CD4-positive, alpha-beta T cell (primary cell): ENCODE measurements at regions of chr2 and their contacts with region 1.

Region 1: GRCh38 chr2:206765242-206766056 is at the starts of genes FASTKD2 and MDH1B:
- DNase-seq: peak; percentile 63 to 94 (median 74)
- ATAC-seq: peak; percentile 89
- H3K4me3 ChIP-seq: peak within 1 kb of the TSS; percentile 71
- H3K4me3 Mint-ChIP-seq: peak within 1 kb of the TSS; percentile 96
- H3K27ac ChIP-seq: peak within 1 kb of the TSS; percentile 80 to 85
- H3K27ac Mint-ChIP-seq: peak within 1 kb of the TSS; percentile 97
- H3K4me1 ChIP-seq: peaks cover 16% of the 10 kb centered on the region
- H3K4me1 Mint-ChIP-seq: peaks cover 46% of the 10 kb centered on the region
- H3K27me3 ChIP-seq: peaks cover 0 to 13% of the 10 kb centered on the region in 2 experiments
- H3K27me3 Mint-ChIP-seq: peaks cover 5% of the 10 kb centered on the region
- CTCF ChIP-seq: no peak
- total RNA-seq, gene FASTKD2: 24.9 to 25.7 TPM
- total RNA-seq, gene MDH1B: 0.25 to 0.31 TPM

Region 2: GRCh38 chr2:206085742-206086445 is 679.6 kb before region 1 on chr2 and contains the start of gene INO80D:
- CTCF ChIA-PET with region 1: interaction called, 4 read pairs
- POLR2A ChIA-PET with region 1: no interaction called
- intact Hi-C with region 1: loop called in 1 of 2 experiments (anchors 10 kb)
- DNase-seq: peak; percentile 62 to 92 (median 72)
- ATAC-seq: peak; percentile 94
- H3K4me3 ChIP-seq: peak within 1 kb of the TSS; percentile 90
- H3K4me3 Mint-ChIP-seq: peak within 1 kb of the TSS; percentile 98
- H3K27ac ChIP-seq: peak within 1 kb of the TSS; percentile 94 to 95
- H3K27ac Mint-ChIP-seq: peak within 1 kb of the TSS; percentile 100
- H3K4me1 ChIP-seq: peaks cover 26% of the 10 kb centered on the region
- H3K4me1 Mint-ChIP-seq: peaks cover 53% of the 10 kb centered on the region
- H3K27me3 ChIP-seq: no peaks in the 10 kb centered on the region
- H3K27me3 Mint-ChIP-seq: no peaks in the 10 kb centered on the region
- CTCF ChIP-seq: peak; percentile 60
- total RNA-seq, gene INO80D: 45.3 to 48.9 TPM

Region 3: GRCh38 chr2:206159346-206160124 is 605.9 kb before region 1 on chr2 and contains the starts of genes EEF1B2 and NDUFS1:
- CTCF ChIA-PET with region 1: no interaction called
- POLR2A ChIA-PET with region 1: interaction called, 6 read pairs
- intact Hi-C with region 1: loop called in 1 of 2 experiments (anchors 5 kb)
- DNase-seq: peak; percentile 91 to 99 (median 95)
- ATAC-seq: peak; percentile 82
- H3K4me3 ChIP-seq: peak within 1 kb of the TSS; percentile 82
- H3K4me3 Mint-ChIP-seq: peak within 1 kb of the TSS; percentile 99
- H3K27ac ChIP-seq: peak within 1 kb of the TSS; percentile 85 to 92
- H3K27ac Mint-ChIP-seq: peak within 1 kb of the TSS; percentile 97
- H3K4me1 ChIP-seq: peaks cover 39% of the 10 kb centered on the region
- H3K4me1 Mint-ChIP-seq: peaks cover 71% of the 10 kb centered on the region
- H3K27me3 ChIP-seq: no peaks in the 10 kb centered on the region
- H3K27me3 Mint-ChIP-seq: no peaks in the 10 kb centered on the region
- CTCF ChIP-seq: no peak
- total RNA-seq, gene EEF1B2: 1,109 to 1,132 TPM
- total RNA-seq, gene NDUFS1: 33.4 to 34.3 TPM

Region 4: GRCh38 chr2:206274434-206275268 is 490.8 kb before region 1 on chr2 and contains the start of gene ZDBF2:
- CTCF ChIA-PET with region 1: no interaction called
- POLR2A ChIA-PET with region 1: no interaction called
- intact Hi-C with region 1: loop called in 1 of 2 experiments (anchors 10 kb)
- DNase-seq: peak in 13 of 14 experiments; percentile 12 to 77 (median 47)
- ATAC-seq: peak; percentile 67
- H3K4me3 ChIP-seq: peak within 1 kb of the TSS; percentile 65
- H3K4me3 Mint-ChIP-seq: peak within 1 kb of the TSS; percentile 92
- H3K27ac ChIP-seq: peak within 1 kb of the TSS in 1 of 2 donors; percentile 38
- H3K27ac Mint-ChIP-seq: peak within 1 kb of the TSS; percentile 89
- H3K4me1 ChIP-seq: peaks cover 15% of the 10 kb centered on the region
- H3K4me1 Mint-ChIP-seq: peaks cover 25% of the 10 kb centered on the region
- H3K27me3 ChIP-seq: peaks cover 36 to 37% of the 10 kb centered on the region in 2 experiments
- H3K27me3 Mint-ChIP-seq: peaks cover 71% of the 10 kb centered on the region
- CTCF ChIP-seq: no peak
- total RNA-seq, gene ZDBF2: 28.7 to 29.7 TPM

Region 5: DNA sequence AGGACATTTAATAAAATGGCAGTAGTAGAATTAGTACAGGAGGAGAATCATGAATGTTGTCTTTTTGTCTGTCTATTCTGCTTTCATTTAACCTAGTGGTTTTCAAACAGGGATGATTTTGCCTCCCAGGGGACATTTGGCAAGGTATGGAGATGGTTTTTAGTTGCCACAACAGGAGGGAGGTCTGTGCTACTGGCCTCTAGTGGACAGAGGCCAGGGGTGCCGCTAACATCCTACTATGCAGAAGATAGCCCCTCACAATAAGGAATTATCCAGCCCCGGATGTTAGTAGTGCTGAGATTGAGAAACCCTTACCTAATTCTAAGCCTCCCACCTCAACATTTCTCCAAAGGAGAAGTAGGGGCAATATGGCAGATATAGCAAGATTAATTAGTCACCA is 18.3 kb after region 1 on chr2:
- CTCF ChIA-PET with region 1: no interaction called
- POLR2A ChIA-PET with region 1: interaction called, 4 read pairs
- intact Hi-C with region 1: loop called in 1 of 2 experiments (anchors 2 kb)
- DNase-seq: no peak
- ATAC-seq: no peak
- H3K4me3 ChIP-seq: no peak overlapping the region
- H3K4me3 Mint-ChIP-seq: no peak overlapping the region
- H3K27ac ChIP-seq: no peak overlapping the region
- H3K27ac Mint-ChIP-seq: no peak overlapping the region
- H3K4me1 ChIP-seq: no peaks in the 10 kb centered on the region
- H3K4me1 Mint-ChIP-seq: peaks cover 25% of the 10 kb centered on the region
- H3K27me3 ChIP-seq: no peaks in the 10 kb centered on the region
- H3K27me3 Mint-ChIP-seq: no peaks in the 10 kb centered on the region
- CTCF ChIP-seq: peak; percentile 23

Region 6: GRCh38 chr2:206856513-206856912 is 91.1 kb after region 1 on chr2:
- CTCF ChIA-PET with region 1: no interaction called
- POLR2A ChIA-PET with region 1: no interaction called
- intact Hi-C with region 1: no loop called
- DNase-seq: no peak
- ATAC-seq: no peak
- H3K4me3 ChIP-seq: no peak overlapping the region
- H3K4me3 Mint-ChIP-seq: no peak overlapping the region
- H3K27ac ChIP-seq: no peak overlapping the region
- H3K27ac Mint-ChIP-seq: no peak overlapping the region
- H3K4me1 ChIP-seq: peaks cover 15% of the 10 kb centered on the region
- H3K4me1 Mint-ChIP-seq: peaks cover 23% of the 10 kb centered on the region
- H3K27me3 ChIP-seq: no peaks in the 10 kb centered on the region
- H3K27me3 Mint-ChIP-seq: no peaks in the 10 kb centered on the region
- CTCF ChIP-seq: no peak

Region 7: DNA sequence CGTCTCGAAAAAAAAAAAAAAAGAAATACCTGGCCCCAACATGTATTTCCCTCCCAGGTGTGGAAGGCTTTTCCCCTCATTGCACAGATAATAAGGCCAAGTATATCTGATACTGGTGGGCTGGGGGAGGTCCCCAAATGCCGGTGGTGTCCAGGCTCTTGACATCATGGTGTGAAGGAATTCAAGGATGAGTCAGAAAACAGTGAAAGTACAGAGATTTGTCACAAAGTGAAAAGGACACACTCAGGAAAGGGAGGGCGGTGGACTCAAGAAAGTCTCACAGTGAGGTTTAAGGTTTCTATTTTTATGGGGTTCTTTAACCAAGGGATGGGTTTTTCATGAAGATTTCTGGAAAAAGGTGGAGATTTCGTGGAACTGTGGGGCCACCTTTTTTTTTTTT is 1042.1 kb after region 1 on chr2:
- CTCF ChIA-PET with region 1: no interaction called
- POLR2A ChIA-PET with region 1: no interaction called
- intact Hi-C with region 1: no loop called
- DNase-seq: no peak
- ATAC-seq: no peak
- H3K4me3 ChIP-seq: no peak overlapping the region
- H3K4me3 Mint-ChIP-seq: no peak overlapping the region
- H3K27ac ChIP-seq: no peak overlapping the region
- H3K27ac Mint-ChIP-seq: no peak overlapping the region
- H3K4me1 ChIP-seq: no peaks in the 10 kb centered on the region
- H3K4me1 Mint-ChIP-seq: no peaks in the 10 kb centered on the region
- H3K27me3 ChIP-seq: no peaks in the 10 kb centered on the region
- H3K27me3 Mint-ChIP-seq: no peaks in the 10 kb centered on the region
- CTCF ChIP-seq: no peak

Region 8: DNA sequence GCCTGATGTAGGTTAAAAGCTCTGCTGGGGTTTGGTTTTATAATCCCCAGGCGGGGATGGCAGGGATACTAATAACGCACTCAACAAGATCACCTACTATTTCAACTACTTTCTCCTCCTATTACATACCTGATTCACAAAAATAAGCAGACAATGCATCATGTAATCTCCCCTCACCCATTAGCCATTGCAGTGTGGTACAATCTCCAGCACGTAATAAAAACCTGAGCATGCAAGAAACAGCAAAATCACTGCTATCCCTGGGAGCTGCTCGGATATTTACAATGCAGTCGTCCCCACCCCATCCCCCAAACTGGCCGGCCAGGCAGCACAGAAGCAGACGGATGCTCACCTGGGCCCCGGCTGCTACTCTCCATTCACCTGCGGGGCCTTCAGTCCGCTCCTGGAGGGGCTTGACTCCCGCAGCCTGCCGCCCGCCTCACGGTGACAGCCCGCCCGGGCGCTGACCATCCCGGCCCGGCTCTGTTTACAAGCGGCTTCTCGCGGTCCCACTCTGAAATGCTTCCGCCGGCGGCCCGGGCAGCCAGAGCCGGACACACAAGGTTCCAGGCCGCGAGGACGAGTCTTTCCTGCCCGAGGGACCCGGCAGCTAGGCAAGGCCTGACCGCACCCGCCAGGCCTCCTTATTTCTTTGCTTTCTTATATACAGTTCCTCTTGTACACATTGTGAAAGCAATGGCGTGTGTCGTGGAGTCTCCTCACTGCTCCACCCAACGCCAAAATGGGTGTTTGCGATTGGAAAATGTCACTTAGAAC is 1259.8 kb after region 1 on chr2 and contains the start of gene PLEKHM3:
- CTCF ChIA-PET with region 1: no interaction called
- POLR2A ChIA-PET with region 1: interaction called, 4 read pairs
- intact Hi-C with region 1: loop called in 1 of 2 experiments (anchors 5 kb)
- DNase-seq: peak; percentile 39 to 83 (median 67)
- ATAC-seq: peak; percentile 74
- H3K4me3 ChIP-seq: peak within 1 kb of the TSS; percentile 82
- H3K4me3 Mint-ChIP-seq: peak within 1 kb of the TSS; percentile 89
- H3K27ac ChIP-seq: peak within 1 kb of the TSS; percentile 58 to 63
- H3K27ac Mint-ChIP-seq: peak within 1 kb of the TSS; percentile 92
- H3K4me1 ChIP-seq: peaks cover 10% of the 10 kb centered on the region
- H3K4me1 Mint-ChIP-seq: peaks cover 21% of the 10 kb centered on the region
- H3K27me3 ChIP-seq: no peaks in the 10 kb centered on the region
- H3K27me3 Mint-ChIP-seq: no peaks in the 10 kb centered on the region
- CTCF ChIP-seq: no peak
- total RNA-seq, gene PLEKHM3: 11.3 to 11.6 TPM